ENCODE measurements at regions of chr11 and their contacts with region 1.

Region 1: GRCh38 chr11:77619576-77620198 is 17.9 kb downstream of the CLNS1A start:
- DNase-seq: peak; percentile 57
- H3K4me3 ChIP-seq: no peak overlapping the region
- H3K27ac ChIP-seq: no peak overlapping the region
- H3K4me1 ChIP-seq: no peaks in the 10 kb centered on the region
- H3K27me3 ChIP-seq: no peaks in the 10 kb centered on the region
- CTCF ChIP-seq: peak; percentile 43 to 59
- POLR2A ChIP-seq: no peak

Region 2: GRCh38 chr11:77198440-77198849 is 421.2 kb before region 1 on chr11:
- CTCF ChIA-PET with region 1: interaction called, 65 read pairs
- POLR2A ChIA-PET with region 1: no interaction called
- dilution Hi-C with region 1: no loop called
- intact Hi-C with region 1: loop called (anchors 2 kb)
- DNase-seq: peak; percentile 11
- H3K4me3 ChIP-seq: no peak overlapping the region
- H3K27ac ChIP-seq: no peak overlapping the region
- H3K4me1 ChIP-seq: no peaks in the 10 kb centered on the region
- H3K27me3 ChIP-seq: no peaks in the 10 kb centered on the region
- CTCF ChIP-seq: peak; percentile 43 to 47
- POLR2A ChIP-seq: no peak

Region 3: DNA sequence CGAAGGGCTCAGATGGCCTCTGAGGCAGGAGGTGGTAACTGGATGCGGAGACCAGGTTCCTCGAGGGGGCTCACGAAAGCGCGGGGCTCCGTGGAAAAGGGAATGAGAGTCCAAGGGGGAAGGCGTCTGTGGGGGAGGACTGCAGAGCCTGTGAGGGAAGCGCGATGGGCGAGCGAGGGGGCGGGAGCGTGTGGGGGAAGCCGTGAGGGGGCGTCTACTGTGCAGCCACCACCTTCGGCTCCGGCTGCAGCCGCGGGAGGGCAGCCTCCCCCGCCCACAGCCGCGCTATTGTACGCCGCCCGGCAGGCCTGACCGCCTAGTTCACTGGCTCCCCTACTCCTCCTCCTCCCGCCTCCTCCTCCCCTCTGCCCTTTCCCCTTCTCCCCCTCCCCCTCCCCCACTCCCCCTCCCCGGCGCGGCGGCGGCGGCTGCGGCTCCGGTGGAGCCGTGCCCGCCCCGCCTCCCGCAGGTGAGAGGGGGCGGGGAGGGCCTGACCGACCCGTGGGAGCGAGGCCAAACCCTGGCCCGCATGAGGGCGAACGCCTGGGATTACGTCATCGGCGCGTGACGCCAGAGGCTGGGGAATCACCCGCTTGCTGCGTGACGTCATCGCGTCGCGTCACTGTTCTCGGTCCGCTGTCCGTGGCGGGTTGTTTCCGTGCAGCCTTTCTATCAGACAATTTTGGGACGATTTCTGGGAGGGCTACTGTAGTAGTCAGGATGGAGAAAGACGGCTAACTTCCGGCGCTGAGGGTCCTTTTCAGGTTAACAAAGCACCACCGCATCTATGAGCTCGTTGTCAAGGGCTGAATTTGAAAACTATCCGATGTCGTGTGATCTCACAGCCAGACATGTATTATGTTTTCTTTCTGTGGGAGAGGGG is 145.6 kb before region 1 on chr11 and contains the start of gene PAK1:
- CTCF ChIA-PET with region 1: interaction called, 15 read pairs
- POLR2A ChIA-PET with region 1: no interaction called
- dilution Hi-C with region 1: no loop called
- intact Hi-C with region 1: loop called (anchors 5 kb)
- DNase-seq: peak; percentile 49
- H3K4me3 ChIP-seq: peak within 1 kb of the TSS; percentile 13 to 46 (median 23)
- H3K27ac ChIP-seq: no peak within 1 kb of the TSS
- H3K4me1 ChIP-seq: peaks cover 3% of the 10 kb centered on the region
- H3K27me3 ChIP-seq: peaks cover 19 to 43% of the 10 kb centered on the region in 2 experiments
- CTCF ChIP-seq: peak in 1 of 2 donors; percentile 44
- POLR2A ChIP-seq: no peak
- total RNA-seq, gene PAK1: 11.2 and 12.9 TPM in 2 replicates

Region 4: DNA sequence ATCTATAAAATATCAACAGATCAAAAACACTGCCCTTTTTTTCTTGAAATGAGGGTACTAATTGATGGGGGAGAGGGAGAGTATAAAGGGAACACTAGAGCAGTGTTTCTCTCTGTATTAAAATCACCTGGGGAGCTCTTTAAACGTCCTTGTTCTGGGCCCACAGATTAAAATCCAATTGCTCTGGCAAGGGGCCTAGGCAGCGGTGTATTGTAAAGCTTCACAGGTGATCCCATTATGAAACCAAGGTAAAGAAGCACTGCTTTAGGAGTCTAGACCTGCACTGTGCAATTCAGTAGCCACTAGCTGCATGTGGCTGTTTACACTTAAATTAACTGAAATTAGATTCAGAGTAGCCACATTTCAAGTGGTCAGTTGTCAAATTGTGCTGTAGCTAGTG is 27.0 kb before region 1 on chr11:
- CTCF ChIA-PET with region 1: interaction called, 12 read pairs
- POLR2A ChIA-PET with region 1: no interaction called
- dilution Hi-C with region 1: no loop called
- intact Hi-C with region 1: no loop called
- DNase-seq: no peak
- H3K4me3 ChIP-seq: no peak overlapping the region
- H3K27ac ChIP-seq: no peak overlapping the region
- H3K4me1 ChIP-seq: peaks cover 10% of the 10 kb centered on the region
- H3K27me3 ChIP-seq: no peaks in the 10 kb centered on the region
- CTCF ChIP-seq: no peak
- POLR2A ChIP-seq: no peak

Region 5: DNA sequence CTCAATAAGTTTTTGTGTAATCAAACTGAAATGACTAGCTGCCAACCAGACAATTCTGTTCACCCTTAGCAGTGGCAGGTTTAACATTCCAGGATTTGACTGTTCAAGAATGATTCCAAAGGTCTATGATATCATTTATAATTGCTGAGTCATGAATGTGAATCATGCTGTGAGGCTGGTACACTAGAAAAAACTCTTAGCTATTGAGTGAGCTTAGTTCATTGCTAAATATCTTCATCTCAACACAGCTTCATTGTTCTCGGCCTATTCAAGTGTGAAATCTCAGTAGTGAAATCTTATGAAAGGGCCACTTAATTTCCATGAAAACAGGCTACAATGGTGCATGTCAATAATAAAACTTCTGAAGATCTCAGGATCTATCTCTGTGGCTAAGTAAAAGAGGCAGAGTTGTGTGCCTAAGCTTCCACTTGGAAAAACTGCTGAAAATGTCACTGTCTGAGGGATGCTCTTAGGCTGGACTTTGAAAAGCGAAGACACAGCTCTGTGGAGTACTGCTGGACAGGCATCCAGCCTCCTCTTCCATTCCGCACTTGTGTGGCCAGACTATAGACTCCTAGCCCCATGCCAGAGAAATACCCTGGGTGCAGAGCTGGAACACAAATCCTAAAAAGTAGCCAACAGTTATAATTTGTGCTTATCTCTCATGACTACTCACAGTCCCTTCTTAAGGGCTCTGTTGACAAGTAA is 17.2 kb before region 1 on chr11:
- CTCF ChIA-PET with region 1: interaction called, 34 read pairs
- POLR2A ChIA-PET with region 1: no interaction called
- dilution Hi-C with region 1: no loop called
- intact Hi-C with region 1: no loop called
- DNase-seq: peak; percentile 75
- H3K4me3 ChIP-seq: no peak overlapping the region
- H3K27ac ChIP-seq: peak overlapping the region; percentile 58
- H3K4me1 ChIP-seq: peaks cover 14% of the 10 kb centered on the region
- H3K27me3 ChIP-seq: no peaks in the 10 kb centered on the region
- CTCF ChIP-seq: no peak
- POLR2A ChIP-seq: no peak

Region 6: DNA sequence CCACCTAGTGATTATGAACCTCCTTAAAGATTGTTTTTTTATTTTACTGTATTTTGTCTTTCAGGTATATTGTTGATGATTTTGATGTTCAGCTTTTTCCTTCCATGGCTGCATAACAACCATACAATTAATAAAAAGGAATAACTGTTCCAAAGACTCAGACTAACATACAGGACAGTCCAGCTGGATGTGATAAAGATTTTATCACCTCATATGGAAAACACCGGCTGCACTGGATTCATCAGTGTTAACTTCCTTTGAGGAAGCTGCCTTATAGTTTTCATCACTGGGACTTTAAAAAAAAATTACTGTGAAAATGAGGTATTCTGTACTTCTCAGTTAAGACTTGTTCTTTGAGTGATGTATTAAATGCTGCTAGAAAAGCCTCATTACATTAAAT is 10.5 kb before region 1 on chr11:
- CTCF ChIA-PET with region 1: interaction called, 34 read pairs
- POLR2A ChIA-PET with region 1: no interaction called
- dilution Hi-C with region 1: no loop called
- intact Hi-C with region 1: no loop called
- DNase-seq: peak; percentile 39
- H3K4me3 ChIP-seq: no peak overlapping the region
- H3K27ac ChIP-seq: no peak overlapping the region
- H3K4me1 ChIP-seq: peaks cover 2% of the 10 kb centered on the region
- H3K27me3 ChIP-seq: no peaks in the 10 kb centered on the region
- CTCF ChIP-seq: no peak
- POLR2A ChIP-seq: no peak

Region 7: GRCh38 chr11:77637345-77638165 is 17.9 kb after region 1 on chr11 and contains the start of gene CLNS1A:
- CTCF ChIA-PET with region 1: interaction called, 10 read pairs
- POLR2A ChIA-PET with region 1: no interaction called
- dilution Hi-C with region 1: no loop called
- intact Hi-C with region 1: no loop called
- DNase-seq: peak; percentile 90
- H3K4me3 ChIP-seq: peak within 1 kb of the TSS; percentile 61 to 88 (median 86)
- H3K27ac ChIP-seq: peak within 1 kb of the TSS; percentile 49
- H3K4me1 ChIP-seq: peaks cover 7% of the 10 kb centered on the region
- H3K27me3 ChIP-seq: no peaks in the 10 kb centered on the region
- CTCF ChIP-seq: no peak
- POLR2A ChIP-seq: peak; percentile 90
- total RNA-seq, gene CLNS1A: 89.9 and 99.7 TPM in 2 replicates